HCT116 (cell line): ENCODE measurements at regions of chr14 and their contacts with region 1.

Region 1: DNA sequence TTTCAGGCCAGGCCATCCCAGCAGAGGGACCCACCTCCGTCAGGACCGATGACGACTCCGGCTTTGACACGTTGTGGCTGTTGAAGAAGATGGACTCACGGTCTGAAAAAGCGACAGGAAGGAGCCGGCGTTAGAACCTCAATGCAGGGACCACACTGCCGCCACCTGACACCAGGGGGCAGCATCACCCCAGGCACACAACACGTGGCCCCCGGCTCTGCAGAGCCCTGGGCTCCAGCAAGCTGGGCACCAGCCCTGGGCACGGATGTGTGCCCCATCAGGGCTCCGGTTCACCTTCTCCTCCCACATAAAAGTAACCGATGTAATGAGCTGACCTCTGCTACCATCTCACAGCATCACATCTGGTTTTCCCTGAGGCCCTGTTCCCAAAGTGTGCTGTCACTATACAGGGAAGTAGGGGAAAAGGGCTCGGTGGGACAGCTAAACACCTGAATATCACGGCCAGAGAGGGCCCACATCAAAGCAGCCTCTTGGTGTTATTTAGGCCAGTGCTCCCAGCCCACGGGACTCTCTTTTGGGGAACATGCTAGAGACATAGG is 29.0 kb downstream of the CHGA start:
- DNase-seq: peak; percentile 27
- ATAC-seq: peak; percentile 97
- H3K4me3 ChIP-seq: no peak overlapping the region
- H3K27ac ChIP-seq: no peak overlapping the region
- H3K4me1 ChIP-seq: peaks cover 0 to 3% of the 10 kb centered on the region in 2 experiments; a peak in 1 of 4 replicates
- H3K27me3 ChIP-seq: no peaks in the 10 kb centered on the region
- CTCF ChIP-seq: peak; percentile 86 to 92 (median 91)
- POLR2A ChIP-seq: no peak
- RAD21 ChIP-seq: peak; percentile 98

Region 2: GRCh38 chr14:92801917-92802316 is 150.1 kb before region 1 on chr14:
- CTCF ChIA-PET with region 1: no interaction called
- POLR2A ChIA-PET with region 1: no interaction called
- RAD21 ChIA-PET with region 1: no interaction called
- intact Hi-C with region 1: no loop called
- DNase-seq: no peak
- ATAC-seq: no peak
- H3K4me3 ChIP-seq: no peak overlapping the region
- H3K27ac ChIP-seq: no peak overlapping the region
- H3K4me1 ChIP-seq: no peaks in the 10 kb centered on the region
- H3K27me3 ChIP-seq: no peaks in the 10 kb centered on the region
- CTCF ChIP-seq: no peak
- POLR2A ChIP-seq: no peak
- RAD21 ChIP-seq: no peak

Region 3: DNA sequence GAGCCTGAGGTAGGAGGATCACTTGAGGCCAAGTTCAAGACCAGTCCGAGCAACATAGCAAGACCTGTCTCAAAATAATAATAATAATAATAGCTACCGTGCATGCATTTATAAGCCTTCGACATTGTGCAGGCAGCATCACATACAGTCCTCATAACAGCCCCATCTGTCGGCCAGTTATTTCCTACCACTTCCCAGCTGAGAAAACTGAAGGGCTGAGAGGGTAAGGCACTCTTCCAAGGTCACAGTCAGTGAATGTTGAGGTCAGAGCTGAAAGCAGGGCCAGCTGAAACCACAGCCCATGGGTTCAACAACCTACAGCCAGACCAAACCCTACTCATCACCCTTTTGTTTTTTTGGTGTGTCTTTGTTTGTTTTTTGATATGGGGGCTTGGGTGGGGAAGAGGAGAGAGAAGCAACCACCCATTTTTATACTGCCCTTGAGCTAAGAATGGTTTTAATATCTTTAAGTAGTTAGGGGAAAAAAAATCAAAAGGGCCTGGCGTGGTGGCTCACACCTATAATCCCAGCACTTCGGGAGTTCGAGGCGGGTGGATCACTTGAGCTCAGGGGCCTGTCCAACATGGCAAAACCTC is 180.6 kb after region 1 on chr14:
- CTCF ChIA-PET with region 1: interaction called, 15 read pairs
- POLR2A ChIA-PET with region 1: no interaction called
- RAD21 ChIA-PET with region 1: interaction called in 1 of 2 experiments, 5 read pairs
- intact Hi-C with region 1: no loop called
- DNase-seq: no peak
- ATAC-seq: peak; percentile 82
- H3K4me3 ChIP-seq: no peak overlapping the region
- H3K27ac ChIP-seq: no peak overlapping the region
- H3K4me1 ChIP-seq: peaks cover 7 to 11% of the 10 kb centered on the region in 2 experiments
- H3K27me3 ChIP-seq: no peaks in the 10 kb centered on the region
- CTCF ChIP-seq: peak; percentile 47 to 56 (median 51)
- POLR2A ChIP-seq: no peak
- RAD21 ChIP-seq: peak; percentile 55

Region 4: GRCh38 chr14:93137864-93138263 is 185.9 kb after region 1 on chr14:
- CTCF ChIA-PET with region 1: interaction called, 15 read pairs
- POLR2A ChIA-PET with region 1: no interaction called
- RAD21 ChIA-PET with region 1: interaction called in 1 of 2 experiments, 4 read pairs
- intact Hi-C with region 1: loop called (anchors 1 kb)
- DNase-seq: no peak
- ATAC-seq: no peak
- H3K4me3 ChIP-seq: no peak overlapping the region
- H3K27ac ChIP-seq: no peak overlapping the region
- H3K4me1 ChIP-seq: peaks cover 0 to 4% of the 10 kb centered on the region in 2 experiments; a peak in 2 of 4 replicates
- H3K27me3 ChIP-seq: no peaks in the 10 kb centered on the region
- CTCF ChIP-seq: 0 out of 6 replicates have a peak, but pooled peaks of 1 of the 3 experiments have one; percentile 4
- POLR2A ChIP-seq: no peak
- RAD21 ChIP-seq: no peak

Region 5: DNA sequence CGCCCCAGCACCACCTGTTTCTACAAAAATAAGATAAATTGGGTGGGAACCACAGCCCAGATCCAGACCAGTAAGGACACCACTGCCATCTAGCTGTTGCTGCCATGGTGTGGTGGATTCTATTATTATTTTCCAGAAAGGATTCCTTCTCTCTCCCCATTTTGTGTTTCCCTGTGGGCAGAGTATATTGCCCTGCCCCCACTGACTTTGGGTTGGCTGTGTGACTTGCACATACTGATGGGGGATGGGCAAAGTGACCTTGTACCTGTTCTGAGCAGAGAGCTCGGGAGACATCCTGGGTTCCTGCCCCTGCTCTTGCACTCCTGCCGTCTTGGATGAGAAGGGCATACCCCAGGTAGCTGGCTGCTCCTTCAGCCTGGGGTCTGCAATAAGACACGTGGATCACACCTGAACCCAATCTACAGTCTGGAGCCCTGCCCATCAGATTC is 208.4 kb after region 1 on chr14:
- CTCF ChIA-PET with region 1: interaction called, 5 read pairs
- POLR2A ChIA-PET with region 1: no interaction called
- RAD21 ChIA-PET with region 1: no interaction called
- intact Hi-C with region 1: loop called (anchors 1 kb)
- DNase-seq: peak; percentile 21
- ATAC-seq: peak; percentile 87
- H3K4me3 ChIP-seq: no peak overlapping the region
- H3K27ac ChIP-seq: no peak overlapping the region
- H3K4me1 ChIP-seq: peaks cover 0 to 8% of the 10 kb centered on the region in 2 experiments; a peak in 2 of 4 replicates
- H3K27me3 ChIP-seq: no peaks in the 10 kb centered on the region
- CTCF ChIP-seq: peak; percentile 34 to 58 (median 52); a peak in 5 of 6 replicates
- POLR2A ChIP-seq: no peak
- RAD21 ChIP-seq: peak; percentile 66

Region 6: GRCh38 chr14:93219103-93219726 is 267.2 kb after region 1 on chr14:
- CTCF ChIA-PET with region 1: interaction called, 4 read pairs
- POLR2A ChIA-PET with region 1: no interaction called
- RAD21 ChIA-PET with region 1: no interaction called
- intact Hi-C with region 1: loop called (anchors 1 kb)
- DNase-seq: peak; percentile 51
- ATAC-seq: peak; percentile 88
- H3K4me3 ChIP-seq: no peak overlapping the region
- H3K27ac ChIP-seq: no peak overlapping the region
- H3K4me1 ChIP-seq: no peaks in the 10 kb centered on the region
- H3K27me3 ChIP-seq: no peaks in the 10 kb centered on the region
- CTCF ChIP-seq: peak; percentile 66 to 79 (median 74)
- POLR2A ChIP-seq: no peak
- RAD21 ChIP-seq: peak; percentile 77

Region 7: GRCh38 chr14:93619176-93619793 is 667.3 kb after region 1 on chr14:
- CTCF ChIA-PET with region 1: no interaction called
- POLR2A ChIA-PET with region 1: no interaction called
- RAD21 ChIA-PET with region 1: no interaction called
- intact Hi-C with region 1: loop called (anchors 2 kb)
- DNase-seq: peak; percentile 48
- ATAC-seq: peak; percentile 76
- H3K4me3 ChIP-seq: no peak overlapping the region
- H3K27ac ChIP-seq: no peak overlapping the region
- H3K4me1 ChIP-seq: no peaks in the 10 kb centered on the region
- H3K27me3 ChIP-seq: peaks cover 27% of the 10 kb centered on the region
- CTCF ChIP-seq: peak; percentile 59 to 70 (median 67); a peak in 5 of 6 replicates
- POLR2A ChIP-seq: no peak
- RAD21 ChIP-seq: peak; percentile 81

Region 8: GRCh38 chr14:93906341-93907329 is 954.6 kb after region 1 on chr14:
- CTCF ChIA-PET with region 1: no interaction called
- POLR2A ChIA-PET with region 1: no interaction called
- RAD21 ChIA-PET with region 1: no interaction called
- intact Hi-C with region 1: loop called (anchors 10 kb)
- DNase-seq: peak; percentile 63
- ATAC-seq: peak; percentile 94
- H3K4me3 ChIP-seq: no peak overlapping the region
- H3K27ac ChIP-seq: no peak overlapping the region
- H3K4me1 ChIP-seq: peaks cover 3 to 7% of the 10 kb centered on the region in 2 experiments; a peak in 3 of 4 replicates
- H3K27me3 ChIP-seq: no peaks in the 10 kb centered on the region
- CTCF ChIP-seq: peak; percentile 78 to 92 (median 89)
- POLR2A ChIP-seq: no peak
- RAD21 ChIP-seq: peak; percentile 80